Motor neuron (in vitro differentiated cells): ENCODE measurements at regions of chr11 and their contacts with region 1.

Region 1: GRCh38 chr11:11787305-11788062 is 54.3 kb upstream of the USP47 start:
- ATAC-seq: peak; percentile 88 to 99 (median 98)
- H3K4me3 ChIP-seq: no peak overlapping the region
- H3K27ac ChIP-seq: no peak overlapping the region
- H3K4me1 ChIP-seq: peaks cover 0 to 2% of the 10 kb centered on the region in 2 donors

Region 2: GRCh38 chr11:10770626-10771254 is 1016.7 kb before region 1 on chr11:
- in situ Hi-C with region 1: loop called in 5 of 9 experiments (anchors 10 to 25 kb)
- ATAC-seq: peak in 7 of 8 experiments; percentile 35 to 74 (median 56)
- H3K4me3 ChIP-seq: no peak overlapping the region
- H3K27ac ChIP-seq: no peak overlapping the region
- H3K4me1 ChIP-seq: no peaks in the 10 kb centered on the region

Region 3: GRCh38 chr11:10933455-10934292 is 853.8 kb before region 1 on chr11:
- in situ Hi-C with region 1: loop called in 4 of 9 experiments (anchors 25 kb)
- ATAC-seq: peak; percentile 53 to 83 (median 60)
- H3K4me3 ChIP-seq: peak overlapping the region in 4 of 5 donors; percentile 12 to 40 (median 26)
- H3K27ac ChIP-seq: peak overlapping the region in 1 of 2 donors; percentile 77
- H3K4me1 ChIP-seq: peaks cover 6 to 22% of the 10 kb centered on the region in 2 donors

Region 4: DNA sequence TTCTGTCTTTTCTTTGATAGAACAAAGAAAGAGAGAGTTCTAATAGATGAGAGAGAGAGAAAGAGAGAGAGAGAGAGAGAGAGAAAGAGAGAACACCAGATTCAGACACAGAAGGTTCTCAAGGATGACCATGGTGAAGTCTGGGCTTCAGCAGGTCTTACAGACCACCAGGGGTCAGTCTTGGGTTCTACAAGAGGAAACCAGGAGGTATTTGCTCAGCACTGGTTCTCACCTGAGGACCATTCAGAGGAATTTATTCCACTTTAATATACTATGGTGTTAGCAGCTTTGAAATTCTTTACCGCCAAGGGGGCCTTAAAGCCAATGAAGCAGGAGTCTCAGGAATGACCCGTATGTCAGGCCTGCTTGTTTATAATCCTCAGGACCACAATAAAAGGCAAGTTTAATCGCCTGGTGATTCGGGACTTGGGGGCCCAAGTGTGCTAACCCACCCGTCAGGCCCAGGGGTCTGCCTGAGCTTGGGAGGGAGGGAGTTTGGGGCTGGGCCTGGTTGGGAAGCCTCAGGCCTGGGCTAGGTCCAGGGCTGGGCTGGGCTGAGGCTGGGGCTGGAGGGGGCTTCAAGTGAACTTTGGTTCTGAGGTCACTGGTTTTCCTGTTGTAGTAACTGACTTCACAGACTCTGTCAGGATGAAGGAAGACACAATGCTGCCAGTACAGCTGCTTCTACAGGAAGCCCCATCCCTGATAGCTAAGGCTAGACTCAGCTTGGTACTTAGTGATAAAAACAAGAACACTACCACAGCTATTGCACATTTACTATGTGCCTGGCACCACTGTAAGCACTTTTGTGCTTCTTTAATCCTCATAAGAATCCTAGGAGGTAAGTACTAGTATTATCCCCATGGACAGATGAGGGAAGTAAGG is 750.4 kb before region 1 on chr11:
- in situ Hi-C with region 1: loop called in 6 of 9 experiments (anchors 10 to 25 kb)
- ATAC-seq: peak; percentile 40 to 93 (median 76)
- H3K4me3 ChIP-seq: no peak overlapping the region
- H3K27ac ChIP-seq: no peak overlapping the region
- H3K4me1 ChIP-seq: peaks cover 12 to 16% of the 10 kb centered on the region in 2 donors

Region 5: DNA sequence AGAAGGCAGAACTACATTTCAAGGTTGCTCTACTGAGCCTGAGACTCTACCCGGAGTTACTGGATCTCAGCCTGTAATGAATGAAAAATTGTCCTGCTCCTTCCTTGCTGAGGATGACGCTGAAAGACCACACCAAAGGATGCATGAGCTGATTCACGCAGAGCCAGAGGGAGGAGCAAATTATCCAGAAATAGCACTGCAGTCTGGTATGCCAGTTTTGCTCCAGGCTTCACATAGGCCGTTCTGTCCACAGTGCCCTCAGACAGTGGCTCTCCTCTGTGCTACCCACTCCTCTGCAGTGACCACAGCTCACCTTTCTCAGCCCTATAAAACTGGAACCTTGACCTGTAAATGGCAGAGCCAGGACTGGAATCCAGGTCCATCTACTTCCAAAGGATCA is 86.4 kb before region 1 on chr11:
- in situ Hi-C with region 1: no loop called
- ATAC-seq: peak in 3 of 8 experiments; percentile 94 to 98 (median 97)
- H3K4me3 ChIP-seq: no peak overlapping the region
- H3K27ac ChIP-seq: no peak overlapping the region
- H3K4me1 ChIP-seq: no peaks in the 10 kb centered on the region

Region 6: DNA sequence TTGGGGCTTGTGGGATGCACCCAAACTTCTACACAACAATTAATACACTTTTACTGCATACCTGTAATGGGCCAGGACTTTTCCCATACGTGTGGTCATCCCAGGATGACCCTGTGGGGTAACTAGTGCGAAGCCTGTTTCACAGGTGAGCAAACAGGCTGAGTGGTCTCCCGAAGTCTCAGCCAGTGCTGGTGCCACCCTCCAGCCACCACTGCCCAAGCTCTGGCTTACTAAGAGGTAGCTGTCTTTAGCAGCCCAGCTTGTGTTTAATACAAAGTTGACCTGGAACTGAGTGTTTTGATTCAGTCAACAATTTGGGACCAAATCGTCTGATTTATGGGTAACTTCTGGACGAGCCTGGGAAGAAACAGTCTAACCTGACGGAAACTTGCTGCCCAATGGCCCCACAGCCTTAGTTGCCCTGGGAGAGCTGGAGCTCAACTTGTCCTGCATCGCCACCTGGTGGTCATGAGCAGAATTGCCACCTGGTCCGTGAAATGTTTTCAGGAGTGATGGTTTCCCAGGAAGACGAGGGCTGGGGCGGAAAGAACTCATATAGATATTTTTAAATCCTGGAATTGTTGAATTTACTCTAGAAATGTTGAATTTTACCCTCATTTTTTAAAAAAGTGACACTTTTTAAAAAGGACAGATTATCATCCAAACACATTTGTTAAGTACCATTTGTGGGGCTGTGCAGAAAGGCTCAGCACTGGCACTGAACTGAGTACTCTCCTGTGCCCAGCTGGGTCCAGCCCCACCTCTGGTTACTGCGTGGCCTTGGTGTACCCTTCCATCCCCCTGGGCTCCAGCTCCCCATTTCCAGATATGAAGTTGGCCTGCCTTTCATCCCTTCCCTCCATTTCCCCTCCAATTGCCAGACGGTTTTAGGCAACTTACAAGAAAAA is 494.3 kb after region 1 on chr11:
- in situ Hi-C with region 1: loop called in 1 of 9 experiments (anchors 25 kb)
- ATAC-seq: peak; percentile 25 to 84 (median 66)
- H3K4me3 ChIP-seq: no peak overlapping the region
- H3K27ac ChIP-seq: no peak overlapping the region
- H3K4me1 ChIP-seq: no peaks in the 10 kb centered on the region